ENCODE measurements at regions of chr11 and their contacts with region 1.

Region 1: DNA sequence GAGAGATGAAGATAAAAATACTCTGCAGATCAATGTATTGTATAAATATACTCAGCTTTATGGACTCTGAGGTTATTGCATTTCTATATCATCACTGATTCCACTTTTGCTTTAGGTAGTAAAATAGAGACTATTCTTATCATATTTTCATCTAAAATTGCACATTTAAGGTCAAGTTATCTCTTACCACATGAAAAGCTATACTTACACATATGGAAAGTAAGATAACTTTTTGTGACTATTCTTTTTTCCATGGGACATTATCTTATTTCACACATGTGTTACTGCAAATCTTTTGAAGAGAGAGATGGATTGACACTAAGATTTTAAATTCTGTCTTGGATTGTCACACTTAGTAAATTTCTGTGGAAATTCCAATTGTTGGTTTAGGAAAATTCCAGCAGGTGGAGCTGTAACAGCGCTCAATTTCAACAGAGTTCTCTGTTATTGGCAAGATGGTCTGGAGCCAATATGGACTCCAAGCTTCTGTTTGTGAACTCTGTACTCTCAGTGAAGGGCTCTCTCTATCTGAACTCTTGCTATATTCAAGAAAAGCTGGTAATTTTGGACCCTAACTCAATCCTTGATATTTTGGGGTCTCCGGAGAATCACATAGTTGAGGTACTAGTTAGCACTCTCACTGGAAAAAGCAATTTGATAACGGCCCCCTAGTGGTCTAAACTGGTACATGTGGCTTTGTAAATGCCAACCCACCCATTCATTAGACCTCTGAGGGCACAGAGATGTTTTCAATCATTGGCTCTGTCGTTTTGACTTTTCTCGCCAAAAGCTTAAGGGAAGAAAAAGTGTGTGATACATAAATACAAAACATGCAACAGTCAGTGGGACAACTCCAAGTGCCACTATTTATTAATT is 429.7 kb downstream of the ETS1 start:
- DNase-seq: peak; percentile 79
- ATAC-seq: peak; percentile 90
- H3K4me3 Mint-ChIP-seq: peak overlapping the region; percentile 63
- H3K27ac Mint-ChIP-seq: peak overlapping the region; percentile 84
- H3K4me1 Mint-ChIP-seq: peaks cover 11% of the 10 kb centered on the region
- H3K27me3 Mint-ChIP-seq: no peaks in the 10 kb centered on the region
- CTCF ChIP-seq: peak; percentile 100

Region 2: DNA sequence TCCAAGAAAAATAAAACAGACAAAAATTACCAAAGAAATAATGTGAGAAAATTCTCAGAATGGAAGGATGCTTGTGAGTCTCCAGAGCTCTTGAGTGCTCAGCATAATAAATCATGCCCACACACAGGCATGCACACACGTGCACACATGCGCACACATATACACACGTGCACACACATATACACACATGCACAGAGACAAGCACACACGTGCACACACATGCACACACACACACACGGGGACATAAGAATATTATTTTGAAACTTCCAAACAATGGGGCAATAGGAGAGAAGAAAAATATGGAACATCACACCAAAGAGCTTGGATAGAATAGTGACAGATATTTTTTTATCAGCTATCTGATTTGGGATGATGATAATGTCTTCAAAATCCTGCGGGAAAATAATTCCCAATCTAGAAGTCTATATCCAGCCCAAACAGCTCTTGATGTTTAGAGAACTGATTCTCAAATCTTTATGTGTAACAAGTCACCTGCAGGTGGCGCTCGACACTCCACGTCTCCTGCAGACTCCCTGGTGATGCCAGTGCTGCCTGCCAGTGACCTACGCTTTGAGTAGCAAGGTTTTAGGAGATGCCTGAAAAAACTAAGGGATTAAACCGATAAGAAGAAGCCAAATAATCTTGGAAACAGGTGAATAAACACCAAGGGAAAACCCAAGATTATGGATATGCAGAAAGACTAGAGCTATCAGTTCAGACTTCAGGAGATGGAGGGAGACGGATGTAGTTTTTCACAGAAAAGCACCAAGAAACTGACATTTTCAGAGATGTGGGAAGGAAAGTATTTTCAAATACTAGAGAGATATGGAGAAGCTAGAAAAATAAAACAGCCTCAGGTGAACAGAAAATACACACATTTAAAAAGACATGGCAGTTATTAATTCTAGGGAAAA is 313.9 kb before region 1 on chr11:
- CTCF ChIA-PET with region 1: interaction called, 3 read pairs
- POLR2A ChIA-PET with region 1: no interaction called
- intact Hi-C with region 1: loop called (anchors 10 kb)
- DNase-seq: peak; percentile 85
- ATAC-seq: peak; percentile 55
- H3K4me3 Mint-ChIP-seq: no peak overlapping the region
- H3K27ac Mint-ChIP-seq: no peak overlapping the region
- H3K4me1 Mint-ChIP-seq: no peaks in the 10 kb centered on the region
- H3K27me3 Mint-ChIP-seq: peaks cover 8% of the 10 kb centered on the region
- CTCF ChIP-seq: peak; percentile 85

Region 3: GRCh38 chr11:128045094-128045725 is 112.5 kb before region 1 on chr11:
- CTCF ChIA-PET with region 1: interaction called, 86 read pairs
- POLR2A ChIA-PET with region 1: no interaction called
- intact Hi-C with region 1: no loop called
- DNase-seq: no peak
- ATAC-seq: no peak
- H3K4me3 Mint-ChIP-seq: no peak overlapping the region
- H3K27ac Mint-ChIP-seq: no peak overlapping the region
- H3K4me1 Mint-ChIP-seq: peaks cover 50% of the 10 kb centered on the region
- H3K27me3 Mint-ChIP-seq: no peaks in the 10 kb centered on the region
- CTCF ChIP-seq: no peak

Region 4: DNA sequence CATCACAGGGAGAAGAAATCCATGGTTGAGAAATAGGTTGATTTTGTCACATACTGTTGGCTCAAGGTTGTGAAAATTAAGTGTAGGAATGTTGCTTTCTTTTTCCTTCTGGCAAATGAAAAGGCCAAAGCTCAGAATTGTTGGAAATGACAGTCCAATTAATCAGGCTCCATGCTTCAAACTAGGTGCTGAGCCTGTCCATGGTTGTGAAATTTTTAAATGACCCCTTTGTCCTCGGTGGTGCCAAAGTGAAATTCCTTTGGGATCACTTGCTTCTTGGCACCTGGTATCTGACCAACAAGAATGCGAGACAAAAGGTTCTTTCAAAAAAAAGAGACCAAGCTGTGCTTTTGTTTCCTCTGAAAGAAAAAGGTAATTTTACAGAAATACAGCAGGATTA is 22.2 kb before region 1 on chr11:
- CTCF ChIA-PET with region 1: interaction called, 11 read pairs
- POLR2A ChIA-PET with region 1: no interaction called
- intact Hi-C with region 1: no loop called
- DNase-seq: no peak
- ATAC-seq: no peak
- H3K4me3 Mint-ChIP-seq: no peak overlapping the region
- H3K27ac Mint-ChIP-seq: no peak overlapping the region
- H3K4me1 Mint-ChIP-seq: no peaks in the 10 kb centered on the region
- H3K27me3 Mint-ChIP-seq: no peaks in the 10 kb centered on the region
- CTCF ChIP-seq: no peak

Region 5: DNA sequence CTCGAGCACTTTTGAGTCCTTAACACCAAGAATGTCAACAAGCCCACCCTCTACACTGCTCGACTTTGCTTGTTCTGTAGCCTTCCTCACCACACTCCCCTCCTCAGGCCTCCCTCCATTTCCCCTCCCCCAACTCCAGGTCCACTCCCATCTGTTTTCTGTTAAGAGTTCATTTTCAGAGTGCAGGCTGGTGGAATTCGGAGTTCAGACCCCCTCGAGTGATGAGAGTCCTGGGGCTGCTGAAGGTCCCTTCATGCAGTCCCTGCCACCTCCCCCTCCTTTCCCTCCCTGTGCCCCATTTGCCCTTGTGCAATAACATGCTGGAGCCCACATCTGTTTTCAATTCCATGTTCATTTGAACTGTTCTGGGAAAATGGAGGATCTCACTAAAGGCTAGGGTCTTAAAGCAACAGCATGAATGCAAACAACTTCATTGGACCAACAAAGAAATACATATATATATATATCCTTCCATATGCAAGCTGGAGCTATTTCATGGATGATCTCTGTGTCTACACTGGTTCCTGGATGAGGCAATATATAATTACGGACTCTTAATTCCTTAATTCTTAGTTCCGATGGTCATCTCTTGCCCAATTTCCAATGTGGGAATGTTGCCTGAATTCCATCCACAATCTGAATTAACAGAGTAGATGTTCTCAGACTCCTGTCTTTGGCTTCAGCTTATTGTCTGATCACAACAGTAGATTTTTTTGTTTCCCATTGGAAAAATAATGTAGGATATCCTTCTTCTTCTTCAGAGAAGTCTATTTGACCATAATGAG is 89.3 kb after region 1 on chr11:
- CTCF ChIA-PET with region 1: interaction called, 13 read pairs
- POLR2A ChIA-PET with region 1: no interaction called
- intact Hi-C with region 1: no loop called
- DNase-seq: no peak
- ATAC-seq: no peak
- H3K4me3 Mint-ChIP-seq: no peak overlapping the region
- H3K27ac Mint-ChIP-seq: no peak overlapping the region
- H3K4me1 Mint-ChIP-seq: no peaks in the 10 kb centered on the region
- H3K27me3 Mint-ChIP-seq: peaks cover 2% of the 10 kb centered on the region
- CTCF ChIP-seq: no peak

Region 6: DNA sequence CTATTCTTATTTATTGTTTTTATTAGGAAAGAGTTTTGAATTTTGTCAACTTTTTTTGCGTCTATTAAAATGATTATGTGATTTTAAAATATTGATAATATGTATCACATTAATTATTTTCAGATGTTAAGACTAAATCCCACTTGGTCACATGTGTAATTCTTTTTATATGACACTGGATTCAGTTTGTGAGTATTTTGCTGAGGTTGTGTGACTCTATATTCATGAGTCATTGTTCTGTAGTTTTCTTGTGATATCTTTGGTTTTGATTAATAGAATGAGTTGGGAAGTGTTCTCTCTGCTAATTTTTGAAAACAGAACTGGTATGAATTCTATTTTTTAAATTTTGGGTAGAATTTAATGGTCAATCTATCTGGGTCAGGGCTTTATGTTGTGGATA is 111.8 kb after region 1 on chr11:
- CTCF ChIA-PET with region 1: no interaction called
- POLR2A ChIA-PET with region 1: no interaction called
- intact Hi-C with region 1: no loop called
- DNase-seq: no peak
- ATAC-seq: no peak
- H3K4me3 Mint-ChIP-seq: no peak overlapping the region
- H3K27ac Mint-ChIP-seq: no peak overlapping the region
- H3K4me1 Mint-ChIP-seq: peaks cover 26% of the 10 kb centered on the region
- H3K27me3 Mint-ChIP-seq: peaks cover 2% of the 10 kb centered on the region
- CTCF ChIP-seq: no peak

Region 7: DNA sequence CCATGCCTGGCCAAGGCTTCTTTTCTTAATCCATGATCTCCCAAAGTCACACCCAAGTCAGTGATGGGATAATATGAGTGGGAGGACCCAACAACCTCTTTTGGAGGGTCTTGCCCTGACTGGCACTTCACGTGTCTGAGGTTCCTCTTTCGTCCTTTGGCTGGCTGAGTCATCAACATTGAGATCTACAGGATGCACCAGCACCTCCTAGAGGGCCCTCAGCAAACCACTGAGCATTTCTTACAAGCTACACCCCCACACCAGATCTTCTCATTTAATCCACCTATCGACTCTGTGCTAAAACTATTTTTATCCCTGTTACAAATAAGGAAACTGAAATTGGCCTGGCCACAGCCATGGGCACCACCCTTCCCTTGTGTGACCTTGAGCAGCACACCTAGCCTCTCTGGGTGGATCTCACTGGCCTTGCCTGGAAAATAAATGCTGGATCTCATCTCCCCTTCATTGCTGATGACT is 599.6 kb after region 1 on chr11:
- CTCF ChIA-PET with region 1: interaction called, 10 read pairs
- POLR2A ChIA-PET with region 1: no interaction called
- intact Hi-C with region 1: no loop called
- DNase-seq: peak; percentile 88
- ATAC-seq: peak; percentile 81
- H3K4me3 Mint-ChIP-seq: peak overlapping the region; percentile 23
- H3K27ac Mint-ChIP-seq: peak overlapping the region; percentile 94
- H3K4me1 Mint-ChIP-seq: peaks cover 83% of the 10 kb centered on the region
- H3K27me3 Mint-ChIP-seq: no peaks in the 10 kb centered on the region
- CTCF ChIP-seq: peak; percentile 70

Region 8: DNA sequence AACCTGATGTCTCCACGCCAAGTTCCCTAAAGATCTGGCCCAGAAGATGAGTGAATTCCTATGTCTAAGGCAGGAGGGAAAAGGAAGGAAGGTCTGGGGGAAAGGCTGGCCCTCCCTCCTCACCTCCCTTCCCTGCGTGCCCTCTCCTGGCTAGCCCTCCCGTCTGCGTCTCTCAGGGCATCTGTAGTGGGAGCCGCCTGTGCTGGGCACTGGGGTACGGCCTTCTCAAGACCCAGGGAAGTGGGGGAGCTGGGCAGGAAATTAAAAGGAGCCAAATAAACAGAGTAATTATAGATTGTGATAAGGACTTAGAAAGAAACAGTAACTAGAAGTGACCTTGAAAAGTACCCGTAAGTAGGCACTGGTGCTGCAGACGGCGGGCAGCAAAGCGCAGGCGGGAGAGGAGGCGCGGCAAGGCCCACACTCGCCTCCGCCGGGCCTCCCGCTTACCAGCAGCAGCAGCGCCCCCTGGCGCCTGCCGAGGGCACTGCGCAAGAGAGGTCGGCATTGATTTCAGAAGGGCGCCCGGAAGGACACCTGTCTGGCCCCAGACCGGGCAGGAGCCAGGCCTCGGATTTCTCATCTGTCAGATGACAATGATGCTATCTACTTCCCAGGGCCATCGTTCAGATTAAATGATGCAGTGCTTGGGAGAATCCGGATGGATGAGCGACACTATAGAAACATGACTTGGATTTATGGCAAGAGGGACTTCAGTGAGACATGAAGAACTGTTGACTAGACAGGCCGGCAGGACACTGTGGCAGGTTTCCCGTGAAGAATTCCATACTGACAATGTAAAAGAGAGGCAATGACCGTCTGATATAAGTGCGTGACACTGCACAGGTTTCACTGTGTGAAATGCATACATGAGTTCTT is 702.1 kb after region 1 on chr11:
- CTCF ChIA-PET with region 1: interaction called, 57 read pairs
- POLR2A ChIA-PET with region 1: no interaction called
- intact Hi-C with region 1: no loop called
- DNase-seq: peak; percentile 87
- ATAC-seq: peak; percentile 98
- H3K4me3 Mint-ChIP-seq: no peak overlapping the region
- H3K27ac Mint-ChIP-seq: no peak overlapping the region
- H3K4me1 Mint-ChIP-seq: no peaks in the 10 kb centered on the region
- H3K27me3 Mint-ChIP-seq: peaks cover 1% of the 10 kb centered on the region
- CTCF ChIP-seq: peak; percentile 98